Motor neuron (in vitro differentiated cells): ENCODE measurements at regions of chr11 and their contacts with region 1.

Region 1: GRCh38 chr11:70755410-70756161 is 357.3 kb downstream of the CTTN start:
- ATAC-seq: peak; percentile 99 to 100 (median 100)
- H3K4me3 ChIP-seq: no peak overlapping the region
- H3K27ac ChIP-seq: no peak overlapping the region
- H3K4me1 ChIP-seq: peaks cover 5 to 6% of the 10 kb centered on the region in 2 donors

Region 2: GRCh38 chr11:70456921-70457532 is 298.6 kb before region 1 on chr11:
- in situ Hi-C with region 1: loop called in 7 of 9 experiments (anchors 10 to 25 kb)
- ATAC-seq: peak; percentile 68 to 92 (median 86)
- H3K4me3 ChIP-seq: no peak overlapping the region
- H3K27ac ChIP-seq: no peak overlapping the region
- H3K4me1 ChIP-seq: peaks cover 18 to 25% of the 10 kb centered on the region in 2 donors

Region 3: DNA sequence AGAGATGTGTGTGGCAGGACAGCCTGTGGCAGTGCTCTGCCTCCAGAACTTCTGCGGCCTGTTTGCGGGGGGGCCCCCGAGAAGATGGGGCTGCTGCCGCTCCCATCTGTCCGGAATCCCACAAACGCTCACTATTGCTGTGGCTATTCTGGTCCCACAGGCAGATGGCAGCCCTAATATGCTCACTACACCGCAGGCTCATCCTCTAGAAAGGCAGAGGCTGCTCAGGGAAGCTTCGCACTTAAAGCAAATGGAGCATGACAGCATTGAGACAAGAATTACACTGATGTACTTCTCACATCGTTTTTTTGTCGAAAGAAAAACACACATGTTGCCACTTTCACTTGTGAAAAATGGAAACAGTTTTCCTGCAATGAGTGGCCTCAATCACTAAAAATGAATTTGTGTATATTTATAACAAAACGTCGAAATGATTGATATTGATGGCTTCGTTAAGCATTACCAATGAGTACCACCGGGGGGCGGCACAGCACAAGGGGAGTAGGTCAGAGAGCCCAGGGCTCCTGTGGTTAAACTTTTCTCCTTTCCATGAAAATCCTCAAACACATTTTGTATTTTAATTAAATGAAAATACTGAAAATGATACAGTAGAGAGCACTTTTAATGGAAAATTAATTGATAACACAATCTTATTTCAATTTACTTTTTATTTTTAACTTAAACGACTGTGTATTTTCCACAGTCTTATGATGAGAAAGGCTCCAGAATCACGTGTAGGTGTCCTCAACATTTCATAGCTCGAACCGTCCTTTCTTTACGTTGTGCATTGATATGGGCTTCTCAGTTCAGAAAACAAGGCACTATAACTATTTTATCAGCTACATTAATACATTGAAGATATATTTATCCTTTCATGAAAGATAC is 288.1 kb before region 1 on chr11:
- in situ Hi-C with region 1: loop called in 6 of 9 experiments (anchors 25 kb)
- ATAC-seq: peak; percentile 42 to 77 (median 69)
- H3K4me3 ChIP-seq: no peak overlapping the region
- H3K27ac ChIP-seq: no peak overlapping the region
- H3K4me1 ChIP-seq: peaks cover 12 to 14% of the 10 kb centered on the region in 2 donors

Region 4: GRCh38 chr11:70483077-70483861 is 272.3 kb before region 1 on chr11:
- in situ Hi-C with region 1: loop called in 1 of 9 experiments (anchors 10 kb)
- ATAC-seq: peak; percentile 42 to 79 (median 58)
- H3K4me3 ChIP-seq: no peak overlapping the region
- H3K27ac ChIP-seq: no peak overlapping the region
- H3K4me1 ChIP-seq: peaks cover 19 to 23% of the 10 kb centered on the region in 2 donors